ENCODE measurements at regions of chr2 and their contacts with region 1.

Region 1: DNA sequence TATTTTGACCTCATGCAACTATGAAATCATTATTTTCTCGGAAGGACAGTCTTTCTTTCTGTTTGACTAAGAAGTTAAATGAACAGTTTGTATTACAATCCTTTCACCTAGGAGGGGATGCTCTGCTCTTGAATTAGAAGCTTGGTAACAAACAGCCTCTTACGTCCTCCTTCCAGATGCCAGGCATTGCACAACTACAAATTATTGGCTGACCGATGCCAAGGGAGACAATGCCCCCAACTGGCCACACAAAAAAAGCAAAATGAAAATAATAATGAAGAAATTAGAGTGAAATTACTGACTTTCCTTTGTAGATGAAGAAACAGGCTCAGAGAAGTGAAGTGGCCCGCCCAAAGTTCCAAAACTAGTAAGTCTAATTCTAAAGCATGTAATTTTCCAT is 177.9 kb downstream of the CYRIA start:
- DNase-seq: no peak

Region 2: GRCh38 chr2:15636972-15637785 is 850.5 kb before region 1 on chr2:
- in situ Hi-C with region 1: loop called (anchors 25 kb)
- DNase-seq: peak; percentile 59

Measured in Caki2 (cell line).